T-cell (primary cell): ENCODE measurements at regions of chr6 and their contacts with region 1.

Region 1: GRCh38 chr6:35342258-35343091 is at the start of gene PPARD:
- DNase-seq: peak; percentile 88 to 98 (median 95)
- ATAC-seq: peak; percentile 96 to 99 (median 98)
- H3K4me3 ChIP-seq: peak within 1 kb of the TSS; percentile 73 to 79
- H3K4me3 Mint-ChIP-seq: peak within 1 kb of the TSS; percentile 93 to 96 (median 93)
- H3K27ac ChIP-seq: peak within 1 kb of the TSS; percentile 65
- H3K27ac Mint-ChIP-seq: peak within 1 kb of the TSS; percentile 91 to 96
- H3K4me1 ChIP-seq: peaks cover 23 to 45% of the 10 kb centered on the region in 2 experiments
- H3K4me1 Mint-ChIP-seq: peaks cover 45 to 53% (median 53%) of the 10 kb centered on the region in 3 donors
- H3K27me3 ChIP-seq: no peaks in the 10 kb centered on the region
- H3K27me3 Mint-ChIP-seq: no peaks in the 10 kb centered on the region
- total RNA-seq, gene PPARD: 36.8 to 41.3 (median 37.9) TPM

Region 2: GRCh38 chr6:35089935-35090505 is 252.5 kb before region 1 on chr6:
- CTCF ChIA-PET with region 1: no interaction called
- POLR2A ChIA-PET with region 1: no interaction called
- DNase-seq: no peak
- ATAC-seq: no peak
- H3K4me3 ChIP-seq: no peak overlapping the region
- H3K4me3 Mint-ChIP-seq: no peak overlapping the region
- H3K27ac ChIP-seq: no peak overlapping the region
- H3K27ac Mint-ChIP-seq: no peak overlapping the region
- H3K4me1 ChIP-seq: no peaks in the 10 kb centered on the region
- H3K4me1 Mint-ChIP-seq: no peaks in the 10 kb centered on the region
- H3K27me3 ChIP-seq: no peaks in the 10 kb centered on the region
- H3K27me3 Mint-ChIP-seq: no peaks in the 10 kb centered on the region

Region 3: DNA sequence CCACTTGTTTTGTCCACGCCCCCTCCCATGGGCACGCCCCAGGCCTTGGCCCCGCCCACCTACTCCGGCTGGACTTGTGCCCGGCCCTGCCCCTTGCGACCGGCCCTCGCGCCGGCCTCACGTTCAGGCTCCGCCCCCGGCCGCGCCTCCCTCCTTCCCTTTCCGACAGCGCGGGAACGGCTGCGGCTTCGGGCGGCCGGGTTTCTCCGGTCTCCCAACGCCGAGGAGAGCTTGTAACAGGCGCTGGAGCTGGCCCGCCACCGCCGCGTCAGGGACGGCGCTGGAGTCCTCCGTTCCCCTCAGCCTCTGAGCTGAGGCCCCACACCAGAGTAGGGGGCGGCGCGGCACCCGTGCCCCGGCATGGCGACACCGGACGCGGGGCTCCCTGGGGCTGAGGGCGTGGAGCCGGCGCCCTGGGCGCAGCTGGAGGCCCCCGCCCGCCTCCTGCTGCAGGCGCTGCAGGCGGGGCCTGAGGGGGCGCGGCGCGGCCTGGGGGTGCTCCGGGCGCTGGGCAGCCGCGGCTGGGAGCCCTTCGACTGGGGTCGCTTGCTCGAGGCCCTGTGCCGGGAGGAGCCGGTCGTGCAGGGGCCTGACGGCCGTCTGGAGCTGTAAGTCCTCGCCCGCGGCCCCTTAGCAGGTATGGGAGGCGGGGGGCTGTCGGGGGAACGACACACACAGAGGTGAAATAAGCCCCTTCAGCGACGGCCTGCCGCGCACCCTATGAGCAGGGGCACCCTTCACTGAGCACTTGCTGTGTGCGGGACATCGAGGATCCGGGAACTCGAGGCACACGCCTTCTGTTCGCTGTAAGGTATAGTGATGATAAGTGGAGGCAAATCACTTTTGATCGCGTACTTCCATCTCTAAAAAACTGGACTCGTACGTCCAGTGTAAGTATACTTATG is 110.0 kb after region 1 on chr6 and contains the start of gene FANCE:
- CTCF ChIA-PET with region 1: interaction called, 7 to 67 read pairs
- POLR2A ChIA-PET with region 1: interaction called in 1 of 2 experiments, 3 read pairs
- DNase-seq: peak; percentile 36 to 95 (median 71)
- ATAC-seq: peak; percentile 76 to 81 (median 78)
- H3K4me3 ChIP-seq: peak within 1 kb of the TSS; percentile 63 to 66
- H3K4me3 Mint-ChIP-seq: peak within 1 kb of the TSS; percentile 79 to 83 (median 81)
- H3K27ac ChIP-seq: peak within 1 kb of the TSS; percentile 57
- H3K27ac Mint-ChIP-seq: peak within 1 kb of the TSS; percentile 68 to 73
- H3K4me1 ChIP-seq: peaks cover 9 to 29% of the 10 kb centered on the region in 2 experiments
- H3K4me1 Mint-ChIP-seq: peaks cover 41 to 49% (median 43%) of the 10 kb centered on the region in 3 donors
- H3K27me3 ChIP-seq: peaks cover 0 to 2% of the 10 kb centered on the region in 2 experiments
- H3K27me3 Mint-ChIP-seq: no peaks in the 10 kb centered on the region
- total RNA-seq, gene FANCE: 5.6 to 12.8 (median 11.7) TPM

Region 4: DNA sequence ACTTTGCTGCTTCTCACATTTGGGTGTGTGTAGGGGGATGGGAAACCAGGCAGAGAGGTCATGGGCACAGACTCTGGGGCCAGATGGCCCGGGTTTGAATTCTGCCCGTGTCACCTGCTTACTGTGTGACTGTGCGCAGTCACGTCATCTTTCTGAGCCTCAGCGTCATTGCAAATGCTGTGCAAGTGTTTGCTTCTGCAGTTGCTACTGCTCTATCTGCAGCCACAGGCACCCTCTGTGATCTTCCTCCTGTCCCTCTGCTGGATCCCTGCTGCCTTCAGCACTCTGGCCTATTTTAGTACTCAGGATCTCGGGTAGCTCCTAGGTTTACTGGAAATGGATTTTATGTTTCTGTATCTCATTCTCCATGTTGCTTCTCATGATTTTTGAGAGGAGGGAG is 210.8 kb after region 1 on chr6:
- CTCF ChIA-PET with region 1: interaction called, 4 to 10 read pairs
- POLR2A ChIA-PET with region 1: no interaction called
- DNase-seq: no peak
- ATAC-seq: no peak
- H3K4me3 ChIP-seq: no peak overlapping the region
- H3K4me3 Mint-ChIP-seq: no peak overlapping the region
- H3K27ac ChIP-seq: no peak overlapping the region
- H3K27ac Mint-ChIP-seq: no peak overlapping the region
- H3K4me1 ChIP-seq: peaks cover 0 to 2% of the 10 kb centered on the region in 2 experiments
- H3K4me1 Mint-ChIP-seq: peaks cover 2 to 7% (median 5%) of the 10 kb centered on the region in 3 donors
- H3K27me3 ChIP-seq: peaks cover 0 to 5% of the 10 kb centered on the region in 2 experiments
- H3K27me3 Mint-ChIP-seq: peaks cover 0 to 2% of the 10 kb centered on the region in 2 donors